ENCODE measurements at regions of chr14 and their contacts with region 1.

Region 1: DNA sequence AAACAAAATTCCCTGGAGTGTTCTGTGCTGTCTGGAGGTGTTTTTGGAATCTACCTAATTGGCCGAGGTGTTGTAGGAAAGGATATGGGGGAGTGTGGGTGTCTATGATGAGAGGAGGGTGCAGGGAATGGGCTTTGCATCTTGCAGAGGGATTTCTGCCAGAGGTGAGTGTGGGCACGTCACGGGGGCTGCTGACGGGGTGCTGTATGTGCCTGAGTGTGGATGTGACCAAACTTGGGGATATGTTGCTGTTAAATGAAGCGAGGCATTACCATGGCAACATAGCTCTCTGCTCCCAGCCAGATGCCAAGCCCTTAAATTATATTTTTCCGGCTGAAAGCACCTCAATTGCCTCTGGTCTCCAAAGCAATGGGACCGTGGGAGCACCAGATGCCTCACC is 44.3 kb upstream of the SPTLC2 start:
- DNase-seq: no peak
- H3K4me3 ChIP-seq: no peak overlapping the region
- H3K27ac ChIP-seq: no peak overlapping the region
- H3K4me1 ChIP-seq: peaks cover 6% of the 10 kb centered on the region
- CTCF ChIP-seq: no peak

Region 2: GRCh38 chr14:77388959-77389358 is 271.8 kb before region 1 on chr14:
- CTCF ChIA-PET with region 1: no interaction called
- POLR2A ChIA-PET with region 1: no interaction called
- intact Hi-C with region 1: no loop called
- DNase-seq: no peak
- H3K4me3 ChIP-seq: no peak overlapping the region
- H3K27ac ChIP-seq: no peak overlapping the region
- H3K4me1 ChIP-seq: no peaks in the 10 kb centered on the region
- CTCF ChIP-seq: no peak

Region 3: GRCh38 chr14:77707724-77708408 is 47.1 kb after region 1 on chr14 and contains the starts of genes ALKBH1 and SLIRP:
- CTCF ChIA-PET with region 1: no interaction called
- POLR2A ChIA-PET with region 1: no interaction called
- intact Hi-C with region 1: loop called (anchors 5 kb)
- DNase-seq: peak; percentile 87
- H3K4me3 ChIP-seq: peak within 1 kb of the TSS; percentile 85
- H3K27ac ChIP-seq: peak within 1 kb of the TSS; percentile 41
- H3K4me1 ChIP-seq: peaks cover 31% of the 10 kb centered on the region
- CTCF ChIP-seq: no peak
- total RNA-seq, gene ALKBH1: 10.0 and 12.6 TPM in 2 replicates
- total RNA-seq, gene SLIRP: 147 and 252 TPM in 2 replicates

Region 4: GRCh38 chr14:77799863-77800730 is 139.3 kb after region 1 on chr14 and contains the start of gene ADCK1:
- CTCF ChIA-PET with region 1: no interaction called
- POLR2A ChIA-PET with region 1: no interaction called
- intact Hi-C with region 1: loop called (anchors 1 kb)
- DNase-seq: peak; percentile 91
- H3K4me3 ChIP-seq: peak within 1 kb of the TSS; percentile 76
- H3K27ac ChIP-seq: peak within 1 kb of the TSS; percentile 32
- H3K4me1 ChIP-seq: peaks cover 30% of the 10 kb centered on the region
- CTCF ChIP-seq: peak; percentile 33; the same call in 1 of the 2 replicates
- total RNA-seq, gene ADCK1: 5.9 and 7.5 TPM in 2 replicates

Region 5: GRCh38 chr14:77812028-77812427 is 151.3 kb after region 1 on chr14:
- CTCF ChIA-PET with region 1: no interaction called
- POLR2A ChIA-PET with region 1: no interaction called
- intact Hi-C with region 1: loop called (anchors 1 kb)
- DNase-seq: no peak
- H3K4me3 ChIP-seq: no peak overlapping the region
- H3K27ac ChIP-seq: no peak overlapping the region
- H3K4me1 ChIP-seq: no peaks in the 10 kb centered on the region
- CTCF ChIP-seq: no peak

Measured in OCI-LY7 (cell line).